ENCODE measurements at regions of chr10 and their contacts with region 1.

Region 1: DNA sequence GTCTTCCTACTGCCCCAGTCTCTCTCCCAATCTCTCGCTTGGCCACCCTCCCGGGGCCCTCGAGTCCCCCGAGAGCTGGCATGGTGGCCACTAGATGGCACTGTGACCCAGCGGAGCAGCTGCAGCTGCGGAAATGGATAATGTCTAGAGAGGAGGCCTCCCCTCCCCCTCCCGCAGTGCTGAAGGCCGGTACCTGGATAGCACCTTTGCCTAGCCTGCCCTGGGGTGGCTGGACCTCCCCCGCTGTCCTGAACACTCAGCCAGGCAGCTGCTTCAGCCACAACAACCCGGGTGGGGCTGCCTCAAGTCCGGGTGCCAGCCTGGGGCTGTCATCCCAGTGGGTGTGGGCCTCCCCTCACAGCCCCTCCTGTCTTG is 65.2 kb downstream of the GOLGA7B start:
- DNase-seq: peak; percentile 87
- H3K4me3 Mint-ChIP-seq: no peak overlapping the region
- H3K27ac Mint-ChIP-seq: no peak overlapping the region
- H3K4me1 Mint-ChIP-seq: peaks cover 3% of the 10 kb centered on the region
- H3K27me3 Mint-ChIP-seq: no peaks in the 10 kb centered on the region

Region 2: GRCh38 chr10:97463363-97464132 is 451.3 kb before region 1 on chr10:
- CTCF ChIA-PET with region 1: no interaction called
- intact Hi-C with region 1: no loop called
- DNase-seq: peak; percentile 49
- H3K4me3 Mint-ChIP-seq: no peak overlapping the region
- H3K27ac Mint-ChIP-seq: peak overlapping the region; percentile 50
- H3K4me1 Mint-ChIP-seq: no peaks in the 10 kb centered on the region
- H3K27me3 Mint-ChIP-seq: no peaks in the 10 kb centered on the region

Region 3: GRCh38 chr10:97903128-97904017 is 11.5 kb before region 1 on chr10:
- CTCF ChIA-PET with region 1: interaction called, 16 read pairs
- intact Hi-C with region 1: no loop called
- DNase-seq: no peak
- H3K4me3 Mint-ChIP-seq: no peak overlapping the region
- H3K27ac Mint-ChIP-seq: no peak overlapping the region
- H3K4me1 Mint-ChIP-seq: no peaks in the 10 kb centered on the region
- H3K27me3 Mint-ChIP-seq: no peaks in the 10 kb centered on the region

Region 4: GRCh38 chr10:98028168-98028770 is 113.4 kb after region 1 on chr10:
- CTCF ChIA-PET with region 1: interaction called, 4 read pairs
- intact Hi-C with region 1: loop called (anchors 1 kb)
- DNase-seq: peak; percentile 83
- H3K4me3 Mint-ChIP-seq: no peak overlapping the region
- H3K27ac Mint-ChIP-seq: no peak overlapping the region
- H3K4me1 Mint-ChIP-seq: peaks cover 4% of the 10 kb centered on the region
- H3K27me3 Mint-ChIP-seq: peaks cover 55% of the 10 kb centered on the region

Region 5: GRCh38 chr10:98045785-98046389 is 131.1 kb after region 1 on chr10:
- CTCF ChIA-PET with region 1: interaction called, 168 read pairs
- intact Hi-C with region 1: loop called (anchors 1 kb)
- DNase-seq: peak; percentile 75
- H3K4me3 Mint-ChIP-seq: no peak overlapping the region
- H3K27ac Mint-ChIP-seq: no peak overlapping the region
- H3K4me1 Mint-ChIP-seq: peaks cover 2% of the 10 kb centered on the region
- H3K27me3 Mint-ChIP-seq: peaks cover 26% of the 10 kb centered on the region

Region 6: GRCh38 chr10:98309366-98310355 is 394.8 kb after region 1 on chr10:
- CTCF ChIA-PET with region 1: interaction called, 8 read pairs
- intact Hi-C with region 1: loop called (anchors 2 kb)
- DNase-seq: peak; percentile 38
- H3K4me3 Mint-ChIP-seq: no peak overlapping the region
- H3K27ac Mint-ChIP-seq: no peak overlapping the region
- H3K4me1 Mint-ChIP-seq: peaks cover 4% of the 10 kb centered on the region
- H3K27me3 Mint-ChIP-seq: peaks cover 20% of the 10 kb centered on the region

Measured in activated naive CD4-positive, alpha-beta T cell treated with anti-CD3 and anti-CD28 coated beads for 36 hours (primary cell).